ACHN (cell line): ENCODE measurements at regions of chr4 and their contacts with region 1.

Region 1: DNA sequence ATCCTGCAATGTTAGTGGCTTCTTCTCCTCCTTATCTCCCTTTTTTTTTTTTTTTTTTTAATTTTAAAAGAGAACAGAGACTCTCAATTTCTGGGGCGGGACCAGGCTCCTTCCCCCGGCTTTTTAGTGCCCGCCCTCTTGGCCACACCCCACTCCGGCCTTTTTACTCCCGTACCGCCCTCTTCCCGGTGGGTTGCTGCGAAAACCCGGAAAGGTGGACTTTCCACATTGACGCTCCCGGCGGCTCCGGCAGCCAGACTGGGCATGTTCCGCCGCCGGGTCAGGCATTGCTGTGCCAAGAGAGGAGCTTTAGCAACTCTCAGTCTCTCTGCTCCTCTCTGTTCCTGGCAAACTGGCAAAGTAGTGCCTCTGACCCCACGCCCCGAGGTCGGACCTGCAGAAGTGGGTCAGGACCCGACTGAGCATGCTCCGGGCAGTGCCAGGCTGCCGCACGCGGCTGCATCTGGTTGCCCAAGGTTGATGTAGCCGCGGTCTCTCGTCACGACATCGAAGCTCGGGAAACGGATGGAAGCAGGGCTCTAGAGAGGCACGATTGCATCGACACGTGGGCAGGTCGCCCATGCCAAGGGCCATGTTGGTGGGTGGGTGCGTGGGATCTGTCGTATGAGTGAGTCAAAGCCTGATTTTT is 1.1 kb upstream of the MFAP3L start:
- DNase-seq: peak; percentile 90

Region 2: GRCh38 chr4:169810325-169811323 is 216.7 kb before region 1 on chr4:
- in situ Hi-C with region 1: loop called (anchors 25 kb)
- DNase-seq: peak; percentile 78

Region 3: GRCh38 chr4:169841776-169842175 is 185.5 kb before region 1 on chr4:
- in situ Hi-C with region 1: no loop called
- DNase-seq: no peak

Region 4: DNA sequence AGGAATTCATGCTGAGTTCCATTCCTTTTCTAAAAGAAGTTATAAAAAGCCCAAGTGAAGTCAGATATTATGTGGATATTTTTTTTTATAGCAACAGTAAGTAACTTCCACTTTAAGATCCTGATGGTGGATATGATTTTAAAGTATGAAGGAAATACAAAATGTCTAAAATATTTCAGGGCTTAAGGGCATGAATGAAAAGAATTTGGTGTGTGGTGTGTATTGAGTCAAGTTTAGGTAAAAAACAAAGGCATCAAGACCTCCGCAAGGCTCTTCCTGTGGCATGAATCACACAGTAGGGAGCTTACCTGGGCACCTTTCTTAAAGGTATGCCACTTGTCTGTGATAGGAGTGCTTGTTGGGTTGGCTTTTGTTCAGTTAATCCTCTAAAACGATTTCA is 324.9 kb after region 1 on chr4:
- in situ Hi-C with region 1: no loop called
- DNase-seq: no peak